GM12878 (cell line): ENCODE measurements at regions of chr16 and their contacts with region 1.

Region 1: DNA sequence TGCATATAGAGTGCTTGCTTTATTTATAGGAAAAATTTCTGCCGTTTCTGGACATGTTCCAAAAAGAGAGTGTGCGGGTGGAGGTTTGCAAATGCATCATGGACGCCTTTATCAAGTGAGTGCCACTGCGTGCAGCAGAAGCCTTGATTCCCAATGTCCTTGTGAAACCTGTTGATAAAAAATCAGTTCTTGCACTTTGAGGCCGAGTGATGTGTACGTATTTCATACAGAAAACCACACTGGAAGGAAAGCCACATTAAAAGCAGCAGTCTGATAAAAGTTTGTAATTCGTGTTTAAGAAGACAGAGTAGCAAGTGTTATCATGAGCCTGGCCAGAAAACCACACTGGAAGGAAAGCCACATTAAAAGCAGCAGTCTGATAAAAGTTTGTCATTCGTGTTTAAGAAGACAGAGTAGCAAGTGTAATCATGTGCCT is 78.0 kb downstream of the KNOP1 start:
- DNase-seq: no peak
- ATAC-seq: no peak
- H3K4me3 ChIP-seq: no peak overlapping the region
- H3K27ac ChIP-seq: no peak overlapping the region
- H3K4me1 ChIP-seq: no peaks in the 10 kb centered on the region
- H3K27me3 ChIP-seq: no peaks in the 10 kb centered on the region
- CTCF ChIP-seq: no peak
- EP300 ChIP-seq: no peak
- POLR2A ChIP-seq: no peak
- RAD21 ChIP-seq: no peak

Region 2: DNA sequence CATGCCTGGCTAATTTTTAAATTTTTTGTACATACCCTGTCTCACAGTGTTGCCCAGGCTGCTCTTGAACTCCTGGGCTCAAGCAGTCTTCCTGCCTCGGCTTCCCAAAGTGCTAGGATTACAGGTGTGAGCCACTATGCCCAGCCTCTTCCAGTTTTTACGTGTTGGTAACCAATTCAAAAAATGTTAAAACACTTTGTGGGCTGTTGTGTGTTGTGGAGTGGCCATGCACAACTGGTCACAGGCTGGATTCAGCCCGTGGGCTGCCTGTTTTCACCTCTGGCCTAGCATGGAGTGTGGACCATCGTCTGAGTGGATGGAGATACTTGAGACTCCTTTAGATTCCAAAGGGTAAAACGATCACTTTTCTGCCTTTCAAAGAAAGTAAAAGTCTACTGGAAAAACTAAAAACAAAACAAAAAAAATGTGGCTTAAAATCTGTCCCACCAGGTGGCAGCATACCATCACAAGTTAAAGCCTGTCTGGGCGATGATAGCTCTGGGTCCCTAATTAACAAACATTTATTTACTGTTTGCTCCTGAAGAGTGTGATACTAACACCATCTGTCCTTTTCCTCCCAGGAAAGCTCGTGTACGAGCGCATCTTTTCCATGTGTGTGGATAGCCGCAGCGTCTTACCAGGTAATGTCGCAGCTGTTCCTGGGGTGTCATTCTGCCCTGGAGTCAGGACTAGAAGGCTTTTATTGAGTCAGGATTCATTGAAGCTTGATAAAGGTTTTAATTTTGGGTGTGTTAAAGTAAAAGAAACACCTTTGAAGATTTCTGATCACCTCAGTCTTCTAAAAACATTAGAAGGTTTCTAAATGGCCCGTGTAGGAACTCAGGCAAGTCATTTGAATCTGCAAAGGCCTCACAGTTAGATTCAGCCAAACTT is 38.7 kb before region 1 on chr16:
- CTCF ChIA-PET with region 1: interaction called, 10 read pairs
- POLR2A ChIA-PET with region 1: no interaction called
- RAD21 ChIA-PET with region 1: no interaction called
- SMC1A ChIA-PET with region 1: no interaction called
- in situ Hi-C with region 1: no loop called
- intact Hi-C with region 1: no loop called
- DNase-seq: no peak
- ATAC-seq: 0 out of 3 replicates have a peak, but pooled peaks have one; percentile 27
- H3K4me3 ChIP-seq: no peak overlapping the region
- H3K27ac ChIP-seq: no peak overlapping the region
- H3K4me1 ChIP-seq: no peaks in the 10 kb centered on the region
- H3K27me3 ChIP-seq: no peaks in the 10 kb centered on the region
- CTCF ChIP-seq: peak; percentile 37 to 64 (median 41); a peak in 4 of 6 replicates
- EP300 ChIP-seq: no peak
- POLR2A ChIP-seq: no peak
- RAD21 ChIP-seq: peak; percentile 62